GM12878 (cell line): ENCODE measurements at regions of chr10 and their contacts with region 1.

Region 1: DNA sequence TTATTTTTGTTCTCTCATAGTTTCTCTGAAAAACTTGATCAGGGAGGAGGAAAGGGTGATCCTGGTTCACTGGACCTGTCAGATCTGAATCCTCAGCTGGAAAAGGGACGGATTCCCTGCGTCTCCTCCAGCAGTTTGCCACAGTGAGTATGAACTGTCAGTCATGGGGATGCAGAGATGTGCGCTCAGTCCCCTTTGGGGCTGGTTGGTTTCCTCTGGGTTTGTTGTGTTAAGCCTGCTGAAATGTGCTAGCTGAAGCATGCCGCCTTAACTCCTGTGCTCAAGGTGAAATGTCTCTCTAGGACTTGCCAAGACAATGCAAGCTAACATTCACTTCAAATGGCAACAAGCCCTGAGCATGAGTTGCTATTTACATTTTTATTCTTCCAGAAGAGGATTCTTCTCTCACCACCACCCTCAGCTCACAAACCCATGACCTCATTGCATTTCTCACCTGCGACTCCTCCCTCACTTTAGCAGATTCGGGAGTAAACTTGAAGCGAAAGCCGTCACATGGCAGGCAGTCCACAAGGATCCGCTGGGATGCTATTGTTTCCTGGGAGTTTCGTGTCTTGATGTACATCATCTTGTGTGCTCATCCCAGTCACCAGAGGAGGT is 192.9 kb upstream of the FZD8 start:
- DNase-seq: no peak
- ATAC-seq: no peak
- H3K4me3 ChIP-seq: no peak overlapping the region
- H3K27ac ChIP-seq: no peak overlapping the region
- H3K4me1 ChIP-seq: no peaks in the 10 kb centered on the region
- H3K27me3 ChIP-seq: no peaks in the 10 kb centered on the region
- CTCF ChIP-seq: no peak
- EP300 ChIP-seq: no peak
- POLR2A ChIP-seq: no peak
- RAD21 ChIP-seq: no peak

Region 2: DNA sequence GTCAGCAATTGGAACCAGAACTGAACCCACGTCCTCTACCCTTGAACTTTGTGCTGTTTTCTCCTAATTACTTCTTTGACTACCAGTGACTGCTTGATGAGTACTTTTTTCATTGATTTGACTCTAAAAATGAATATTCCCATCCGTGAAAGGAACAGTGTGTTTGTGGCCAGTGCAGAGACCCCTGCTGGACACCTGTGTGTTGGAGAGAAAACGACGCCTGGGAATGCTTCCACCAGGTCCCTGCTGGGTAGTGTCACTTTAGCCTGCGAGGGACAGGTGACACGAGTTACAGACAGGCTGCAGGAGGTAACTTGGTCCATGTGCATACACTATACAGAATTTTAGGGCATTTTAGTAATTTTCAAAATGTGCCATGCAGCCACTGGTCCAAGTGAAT is 236.6 kb before region 1 on chr10:
- CTCF ChIA-PET with region 1: no interaction called
- POLR2A ChIA-PET with region 1: no interaction called
- RAD21 ChIA-PET with region 1: no interaction called
- SMC1A ChIA-PET with region 1: no interaction called
- in situ Hi-C with region 1: no loop called
- intact Hi-C with region 1: no loop called
- DNase-seq: no peak
- ATAC-seq: no peak
- H3K4me3 ChIP-seq: no peak overlapping the region
- H3K27ac ChIP-seq: no peak overlapping the region
- H3K4me1 ChIP-seq: no peaks in the 10 kb centered on the region
- H3K27me3 ChIP-seq: 0 out of 4 replicates have a peak, but pooled peaks cover 0 to 2% of the 10 kb centered on the region in 2 experiments
- CTCF ChIP-seq: peak in 2 of 3 experiments; percentile 12 to 17; a peak in 1 of 6 replicates
- EP300 ChIP-seq: no peak
- POLR2A ChIP-seq: no peak
- RAD21 ChIP-seq: no peak

Region 3: GRCh38 chr10:35896001-35896400 is 61.0 kb after region 1 on chr10:
- CTCF ChIA-PET with region 1: no interaction called
- POLR2A ChIA-PET with region 1: no interaction called
- RAD21 ChIA-PET with region 1: no interaction called
- SMC1A ChIA-PET with region 1: no interaction called
- in situ Hi-C with region 1: no loop called
- intact Hi-C with region 1: loop called (anchors 10 kb)
- DNase-seq: no peak
- ATAC-seq: no peak
- H3K4me3 ChIP-seq: no peak overlapping the region
- H3K27ac ChIP-seq: no peak overlapping the region
- H3K4me1 ChIP-seq: no peaks in the 10 kb centered on the region
- H3K27me3 ChIP-seq: no peaks in the 10 kb centered on the region
- CTCF ChIP-seq: no peak
- EP300 ChIP-seq: no peak
- POLR2A ChIP-seq: no peak
- RAD21 ChIP-seq: no peak